ENCODE measurements at regions of chr17 and their contacts with region 1.

Region 1: GRCh38 chr17:79645022-79645776 is 34.3 kb upstream of the RBFOX3 start:
- DNase-seq: no peak
- ATAC-seq: no peak
- H3K4me3 ChIP-seq: no peak overlapping the region
- H3K27ac ChIP-seq: no peak overlapping the region
- H3K4me1 ChIP-seq: no peaks in the 10 kb centered on the region
- H3K27me3 ChIP-seq: peaks cover 46% of the 10 kb centered on the region
- CTCF ChIP-seq: no peak
- POLR2A ChIP-seq: no peak
- RAD21 ChIP-seq: no peak

Region 2: GRCh38 chr17:79504181-79504605 is 141.0 kb before region 1 on chr17:
- CTCF ChIA-PET with region 1: no interaction called
- POLR2A ChIA-PET with region 1: no interaction called
- RAD21 ChIA-PET with region 1: no interaction called
- intact Hi-C with region 1: no loop called
- DNase-seq: no peak
- ATAC-seq: peak; percentile 66; the same call in 1 of the 2 replicates
- H3K4me3 ChIP-seq: no peak overlapping the region
- H3K27ac ChIP-seq: no peak overlapping the region
- H3K4me1 ChIP-seq: no peaks in the 10 kb centered on the region
- H3K27me3 ChIP-seq: peaks cover 27% of the 10 kb centered on the region; the same call in 1 of the 2 replicates
- CTCF ChIP-seq: peak in 1 of 3 experiments; percentile 26; a peak in 1 of 6 replicates
- POLR2A ChIP-seq: no peak
- RAD21 ChIP-seq: no peak

Region 3: DNA sequence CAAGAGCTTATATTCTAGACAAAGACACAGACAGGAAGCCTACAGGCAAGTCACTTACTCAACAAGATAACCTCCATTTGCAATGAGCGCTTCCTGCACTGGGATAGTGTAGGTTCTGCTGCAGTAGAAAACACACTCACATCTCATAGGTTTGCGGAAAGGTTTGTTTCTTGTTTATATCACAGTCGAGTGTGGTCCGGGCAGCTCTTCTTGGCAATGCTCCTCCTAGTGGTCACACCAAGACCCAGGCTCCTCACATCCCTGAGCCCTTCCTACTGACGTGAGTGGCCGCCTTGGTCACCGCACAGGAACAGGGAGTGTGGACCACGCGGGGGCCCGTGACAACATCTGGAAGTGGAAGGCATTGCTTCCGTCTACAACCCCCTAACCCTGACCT is 13.6 kb after region 1 on chr17:
- CTCF ChIA-PET with region 1: interaction called, 11 read pairs
- POLR2A ChIA-PET with region 1: no interaction called
- RAD21 ChIA-PET with region 1: no interaction called
- intact Hi-C with region 1: no loop called
- DNase-seq: peak; percentile 43
- ATAC-seq: peak; percentile 100
- H3K4me3 ChIP-seq: no peak overlapping the region
- H3K27ac ChIP-seq: no peak overlapping the region
- H3K4me1 ChIP-seq: no peaks in the 10 kb centered on the region; a peak in 2 of 4 replicates
- H3K27me3 ChIP-seq: peaks cover 8% of the 10 kb centered on the region
- CTCF ChIP-seq: peak in 2 of 3 experiments; percentile 84 to 96; a peak in 4 of 6 replicates
- POLR2A ChIP-seq: no peak
- RAD21 ChIP-seq: peak; percentile 36; the same call in 1 of the 2 replicates

Measured in HCT116 (cell line).